ENCODE measurements at regions of chr11 and their contacts with region 1.

Region 1: DNA sequence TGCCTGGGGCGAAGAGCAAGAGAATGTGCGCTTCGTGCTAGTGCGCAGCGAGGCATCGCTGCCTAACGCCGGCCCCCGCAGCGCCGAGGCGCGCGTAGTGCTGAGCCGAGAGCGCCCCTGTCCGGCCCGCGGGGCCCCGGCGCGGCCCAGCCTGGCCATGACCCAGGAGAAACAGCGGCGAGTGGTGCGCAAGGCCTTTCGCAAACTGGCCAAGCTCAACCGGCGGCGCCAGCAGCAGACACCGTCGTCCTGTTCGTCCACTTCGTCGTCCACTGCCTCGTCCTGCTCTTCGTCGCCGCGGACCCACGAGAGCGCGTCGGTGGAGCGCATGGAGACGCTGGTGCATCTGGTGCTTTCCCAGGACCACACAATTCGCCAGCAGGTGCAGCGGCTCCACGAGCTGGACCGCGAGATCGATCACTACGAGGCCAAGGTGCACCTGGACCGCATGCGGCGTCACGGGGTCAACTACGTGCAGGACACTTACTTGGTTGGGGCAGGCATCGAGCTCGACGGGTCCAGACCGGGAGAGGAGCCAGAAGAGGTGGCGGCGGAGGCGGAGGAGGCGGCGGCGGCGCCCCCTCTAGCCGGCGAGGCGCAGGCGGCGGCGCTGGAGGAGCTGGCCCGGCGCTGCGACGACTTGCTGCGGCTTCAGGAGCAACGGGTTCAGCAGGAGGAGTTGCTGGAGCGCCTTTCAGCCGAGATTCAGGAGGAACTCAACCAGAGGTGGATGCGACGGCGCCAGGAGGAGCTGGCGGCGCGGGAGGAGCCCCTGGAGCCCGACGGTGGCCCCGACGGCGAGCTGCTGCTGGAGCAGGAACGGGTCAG is 1.0 kb downstream of the RASSF10 start:
- DNase-seq: peak in 1 of 2 donors; percentile 85
- H3K4me3 ChIP-seq: peak overlapping the region; percentile 15
- CTCF ChIP-seq: no peak
- POLR2A ChIP-seq: no peak

Region 2: GRCh38 chr11:11960687-11961086 is 1049.4 kb before region 1 on chr11:
- intact Hi-C with region 1: no loop called
- DNase-seq: peak in 1 of 2 donors; percentile 48
- H3K4me3 ChIP-seq: no peak overlapping the region
- CTCF ChIP-seq: no peak
- POLR2A ChIP-seq: no peak

Region 3: DNA sequence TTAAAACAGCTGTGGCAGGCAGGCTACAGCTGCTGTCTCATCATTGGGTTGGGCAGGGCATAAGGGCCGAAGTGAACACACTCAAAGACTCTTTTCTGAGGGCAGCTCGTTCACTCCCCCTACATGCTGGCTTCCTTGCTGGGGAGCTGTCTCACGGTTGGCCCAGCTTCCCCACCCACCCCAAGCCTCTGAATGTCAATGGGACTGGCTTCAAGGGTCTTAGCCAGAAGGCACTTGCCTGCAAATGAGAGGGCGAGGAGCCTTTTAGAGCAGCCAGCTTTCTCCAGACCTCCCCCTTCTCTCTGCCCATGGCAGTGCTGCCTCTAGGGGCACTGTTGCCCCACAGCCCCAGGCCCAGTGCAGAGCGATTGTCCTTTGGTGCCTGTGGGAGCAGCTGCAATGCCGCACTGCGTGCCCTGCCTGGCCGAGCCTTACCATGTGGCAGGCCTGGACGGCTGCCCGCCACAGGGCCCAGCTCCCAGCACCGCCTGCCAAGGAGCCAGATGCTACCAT is 95.7 kb before region 1 on chr11:
- intact Hi-C with region 1: no loop called
- DNase-seq: peak in 1 of 2 donors; percentile 86
- H3K4me3 ChIP-seq: no peak overlapping the region
- CTCF ChIP-seq: no peak
- POLR2A ChIP-seq: no peak

Region 4: GRCh38 chr11:13140028-13140870 is 130.1 kb after region 1 on chr11:
- intact Hi-C with region 1: loop called (anchors 10 kb)
- DNase-seq: no peak
- H3K4me3 ChIP-seq: no peak overlapping the region
- CTCF ChIP-seq: peak in 1 of 3 donors; percentile 6
- POLR2A ChIP-seq: no peak

Region 5: GRCh38 chr11:13465909-13466371 is 455.8 kb after region 1 on chr11:
- intact Hi-C with region 1: no loop called
- DNase-seq: no peak
- H3K4me3 ChIP-seq: no peak overlapping the region
- CTCF ChIP-seq: no peak
- POLR2A ChIP-seq: no peak

Measured in lower leg skin (tissue), 4 donors.